ENCODE measurements at regions of chr17 and their contacts with region 1.

Region 1: GRCh38 chr17:16537130-16537458 is 31.9 kb downstream of the ZNF287 start:
- DNase-seq: no peak
- ATAC-seq: no peak

Region 2: DNA sequence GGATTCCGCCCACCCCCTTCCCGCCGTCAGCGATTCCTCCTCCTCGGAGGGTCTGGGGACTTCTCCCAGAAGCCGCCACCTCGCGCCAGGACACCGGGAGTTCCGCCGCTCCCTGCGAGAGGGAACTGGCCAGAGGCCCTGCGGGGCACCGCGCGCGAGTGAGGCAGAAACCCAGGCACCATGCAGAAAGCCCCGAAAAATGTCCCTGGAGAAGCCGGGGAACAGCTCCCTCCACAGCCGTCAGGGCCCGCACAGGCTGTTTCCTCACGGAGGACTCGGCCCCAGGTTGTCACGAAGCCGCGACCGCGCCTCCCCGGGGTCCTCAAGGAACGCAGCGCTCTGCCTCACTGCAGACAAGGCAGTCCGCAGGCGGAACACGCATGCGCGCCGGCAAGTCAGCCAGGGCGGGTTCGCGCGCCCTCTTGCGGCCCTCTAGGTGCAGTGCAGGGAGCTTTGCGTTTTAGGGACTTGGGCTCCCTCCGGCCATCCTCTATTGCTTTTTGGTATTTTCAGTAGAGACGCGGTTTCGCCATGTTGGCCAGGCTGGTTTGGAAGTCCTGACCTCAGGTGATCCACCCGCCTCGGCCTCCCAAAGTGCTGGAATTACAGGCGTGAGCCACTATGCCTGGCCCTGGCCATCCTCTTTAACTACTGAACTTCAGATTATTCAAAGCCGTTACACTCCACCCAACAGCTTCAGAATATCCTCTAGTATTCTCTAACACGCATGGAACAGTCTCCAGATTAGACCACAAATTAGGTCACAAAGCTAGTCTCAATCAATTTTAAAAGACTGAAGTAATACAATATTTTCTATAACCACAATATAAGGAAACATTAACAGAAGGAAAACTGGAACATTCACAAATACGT is 52.2 kb after region 1 on chr17:
- intact Hi-C with region 1: loop called (anchors 2 to 10 kb)
- DNase-seq: peak; percentile 94
- ATAC-seq: peak; percentile 91 to 92